ENCODE measurements at regions of chr6 and their contacts with region 1.

Region 1: DNA sequence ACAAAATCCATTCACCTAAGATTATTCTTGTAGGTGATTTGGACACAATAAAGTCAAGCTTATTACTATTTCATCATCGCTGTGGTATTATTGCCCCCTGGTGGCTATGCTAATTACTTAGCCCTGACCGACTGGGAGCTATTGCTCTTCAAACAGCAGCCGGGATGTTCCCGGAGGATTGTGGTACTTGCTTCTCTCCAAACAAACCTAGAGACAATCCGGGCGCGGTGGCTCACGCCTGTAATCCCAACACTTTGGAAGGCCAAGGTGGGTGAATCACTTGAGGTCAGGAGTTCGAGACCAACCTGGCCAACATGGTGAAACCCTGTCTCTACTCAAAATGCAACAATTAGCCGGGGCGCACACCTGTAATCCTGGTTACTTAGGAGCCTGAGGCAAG is 15.4 kb upstream of the STMND1 start:
- DNase-seq: no peak

Region 2: DNA sequence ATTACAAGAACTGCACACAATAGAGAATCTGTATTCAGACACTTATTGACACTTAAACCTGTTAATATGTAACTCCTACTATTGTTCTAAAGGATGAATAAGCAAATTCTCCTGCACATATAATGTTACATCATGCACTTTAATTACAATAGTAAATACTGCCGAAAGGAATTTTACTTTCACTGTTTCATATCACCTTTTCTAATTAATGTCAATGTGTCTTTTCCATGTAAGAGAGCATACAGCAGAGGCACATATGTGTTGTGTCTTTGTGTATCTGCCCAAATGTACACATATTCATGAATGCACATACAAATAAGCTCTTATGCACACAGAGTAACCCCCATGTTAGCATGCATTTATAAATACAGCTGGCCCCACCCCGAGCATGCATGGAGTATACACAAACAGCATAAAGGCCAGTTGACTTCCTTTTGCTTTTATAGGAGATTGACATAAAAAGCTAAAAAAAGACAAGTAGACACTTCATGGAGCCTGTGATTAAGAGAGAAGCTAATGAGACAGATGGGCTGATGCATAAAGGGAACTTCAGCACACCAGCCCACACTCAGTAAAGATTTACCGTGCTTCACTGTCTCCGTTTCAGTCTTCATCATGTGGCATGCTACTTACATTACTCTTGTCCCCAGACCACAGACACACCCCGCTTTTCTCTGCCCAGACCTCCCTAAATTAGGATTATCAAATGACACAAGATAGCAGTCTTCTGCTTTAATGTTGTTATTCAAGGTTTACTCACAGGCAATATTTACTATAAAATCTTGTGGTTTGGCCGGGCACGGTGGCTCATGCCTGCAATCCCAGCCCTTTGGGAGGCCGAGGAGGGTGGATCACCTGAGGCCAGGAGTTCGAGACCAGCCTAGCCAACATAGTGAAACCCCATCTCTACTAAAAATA is 509.8 kb before region 1 on chr6:
- intact Hi-C with region 1: no loop called
- DNase-seq: no peak

Region 3: DNA sequence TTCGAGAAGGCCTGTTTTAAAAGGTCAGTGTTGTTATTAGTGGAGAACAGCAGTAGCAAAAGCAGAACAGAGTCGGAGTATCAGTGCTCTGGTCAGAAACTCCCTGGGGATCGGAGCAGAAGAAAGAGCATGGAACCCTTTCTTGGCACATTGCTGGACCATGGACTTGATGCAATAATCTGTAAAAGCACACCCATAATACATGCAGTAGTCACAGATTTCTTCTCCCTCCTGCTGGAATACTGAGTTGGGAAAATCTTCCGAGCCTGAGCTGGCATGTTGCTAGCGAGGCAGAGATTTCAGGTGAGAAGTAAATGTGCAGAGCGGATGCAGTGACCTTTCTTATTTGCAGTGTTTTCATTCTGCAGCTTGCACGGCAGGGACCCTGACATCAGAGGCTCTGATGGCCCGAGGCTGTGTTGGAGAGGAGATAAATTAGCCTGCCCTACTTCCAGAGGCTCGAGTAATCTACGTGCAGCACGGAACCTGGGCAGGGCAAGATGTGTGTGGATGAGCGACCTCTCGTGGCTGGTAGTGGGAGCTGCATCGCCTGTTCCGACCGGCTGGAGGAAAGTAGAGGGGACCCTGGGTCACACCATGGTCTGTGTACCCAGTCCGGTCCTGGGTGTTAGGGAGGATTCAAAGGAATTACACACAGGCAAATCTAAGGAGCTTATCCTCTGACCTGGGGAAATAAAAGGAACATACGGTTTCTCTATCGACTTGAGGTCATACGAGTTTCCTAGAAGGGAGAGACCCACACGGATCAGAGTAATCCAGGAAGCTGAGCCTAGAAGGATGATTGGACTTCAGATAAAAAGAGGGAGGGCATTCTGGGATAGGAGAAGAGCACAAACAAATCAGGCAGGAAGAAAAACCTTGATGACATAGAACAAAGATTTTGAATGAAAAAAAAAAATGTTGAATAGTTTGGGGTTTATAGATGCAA is 121.6 kb before region 1 on chr6:
- intact Hi-C with region 1: loop called in 1 of 2 experiments (anchors 10 kb)
- DNase-seq: peak; percentile 85

Region 4: GRCh38 chr6:17012421-17013225 is 73.8 kb before region 1 on chr6:
- intact Hi-C with region 1: loop called in 1 of 2 experiments (anchors 5 kb)
- DNase-seq: no peak

Region 5: GRCh38 chr6:17193106-17193775 is 106.8 kb after region 1 on chr6:
- intact Hi-C with region 1: no loop called
- DNase-seq: no peak